H1 (cell line): ENCODE measurements at regions of chr10 and their contacts with region 1.

Region 1: DNA sequence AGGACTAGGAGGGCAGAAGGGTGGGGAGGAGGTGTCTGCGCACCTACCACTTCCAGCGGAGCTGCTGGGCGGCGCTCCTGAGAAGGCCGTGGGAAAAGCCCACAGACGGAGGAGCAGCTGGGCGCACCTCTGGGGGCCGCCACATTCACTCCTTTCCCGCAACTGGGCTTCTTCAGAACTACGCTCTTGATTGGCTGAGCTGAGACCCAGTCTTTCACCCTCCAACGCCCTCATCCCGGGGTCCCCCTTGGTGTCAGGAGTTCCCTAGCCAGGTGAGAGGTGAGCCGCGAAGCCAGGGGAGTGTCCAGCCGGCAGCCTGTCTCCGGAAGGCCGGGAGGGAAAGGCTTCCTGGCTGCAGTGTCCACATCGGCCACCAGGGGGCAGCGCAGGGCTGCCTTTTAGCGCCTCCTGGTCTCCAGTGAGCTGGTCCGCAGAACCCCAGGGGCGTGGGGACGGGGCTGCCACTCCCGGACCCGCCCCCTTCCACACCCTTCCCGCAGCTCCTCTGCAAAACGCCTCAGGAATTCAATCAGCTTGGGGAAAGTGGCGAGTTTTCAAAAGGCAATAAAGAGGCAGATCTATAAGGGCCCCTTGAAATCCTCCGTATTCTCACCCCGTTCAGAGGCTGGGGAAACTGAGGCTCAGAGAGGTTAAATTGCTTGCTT is 98.8 kb downstream of the CHST15 start:
- DNase-seq: peak; percentile 82 to 100
- H3K4me3 ChIP-seq: peak overlapping the region; percentile 8 to 59 (median 41); a peak in 7 of 8 replicates
- H3K27ac ChIP-seq: no peak overlapping the region
- H3K4me1 ChIP-seq: peaks cover 0 to 12% (median 3%) of the 10 kb centered on the region in 4 experiments; a peak in 5 of 7 replicates
- H3K27me3 ChIP-seq: peaks cover 0 to 14% (median 10%) of the 10 kb centered on the region in 4 experiments; a peak in 6 of 7 replicates
- CTCF ChIP-seq: peak; percentile 95 to 97 (median 96)
- EP300 ChIP-seq: peak in 1 of 2 experiments; percentile 25; a peak in 1 of 3 replicates
- POLR2A ChIP-seq: no peak
- RAD21 ChIP-seq: peak; percentile 94 to 95

Region 2: GRCh38 chr10:123858077-123858681 is 136.4 kb before region 1 on chr10:
- CTCF ChIA-PET with region 1: no interaction called
- POLR2A ChIA-PET with region 1: no interaction called
- DNase-seq: peak in 1 of 2 experiments; percentile 20
- H3K4me3 ChIP-seq: no peak overlapping the region
- H3K27ac ChIP-seq: no peak overlapping the region
- H3K4me1 ChIP-seq: peaks cover 0 to 3% (median under 1%) of the 10 kb centered on the region in 4 experiments; a peak in 3 of 7 replicates
- H3K27me3 ChIP-seq: no peaks in the 10 kb centered on the region
- CTCF ChIP-seq: no peak
- EP300 ChIP-seq: no peak
- POLR2A ChIP-seq: no peak
- RAD21 ChIP-seq: no peak

Region 3: GRCh38 chr10:123945325-123945920 is 49.1 kb before region 1 on chr10:
- CTCF ChIA-PET with region 1: no interaction called
- POLR2A ChIA-PET with region 1: no interaction called
- DNase-seq: no peak
- H3K4me3 ChIP-seq: no peak overlapping the region
- H3K27ac ChIP-seq: no peak overlapping the region
- H3K4me1 ChIP-seq: peaks cover 0 to 8% (median 0%) of the 10 kb centered on the region in 4 experiments; a peak in 2 of 7 replicates
- H3K27me3 ChIP-seq: no peaks in the 10 kb centered on the region
- CTCF ChIP-seq: no peak
- EP300 ChIP-seq: no peak
- POLR2A ChIP-seq: no peak
- RAD21 ChIP-seq: no peak

Region 4: DNA sequence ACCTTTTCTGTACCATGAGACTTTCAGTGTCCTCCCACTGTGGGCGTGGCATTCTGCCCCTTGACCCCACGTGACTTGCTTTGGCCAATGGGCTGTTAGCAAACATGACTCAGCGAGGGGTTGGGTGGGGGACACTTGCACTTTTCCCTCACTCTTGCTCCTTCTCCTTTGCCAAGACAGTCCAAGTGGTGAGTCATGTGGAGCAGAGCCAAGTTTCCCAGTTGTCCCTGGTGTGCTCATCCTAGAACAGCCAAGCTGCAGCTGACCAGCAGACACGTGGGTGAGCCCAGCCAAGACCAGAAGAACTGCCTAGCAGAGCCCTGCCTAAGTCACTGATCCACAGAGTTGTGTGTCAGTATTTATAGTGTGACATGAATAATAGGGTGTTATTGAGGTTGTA is 20.1 kb before region 1 on chr10:
- CTCF ChIA-PET with region 1: interaction called, 29 read pairs
- POLR2A ChIA-PET with region 1: no interaction called
- DNase-seq: peak in 1 of 2 experiments; percentile 46
- H3K4me3 ChIP-seq: no peak overlapping the region
- H3K27ac ChIP-seq: no peak overlapping the region
- H3K4me1 ChIP-seq: peaks cover 4 to 25% (median 12%) of the 10 kb centered on the region in 4 experiments
- H3K27me3 ChIP-seq: peaks cover 3 to 29% (median 25%) of the 10 kb centered on the region in 4 experiments
- CTCF ChIP-seq: no peak
- EP300 ChIP-seq: no peak
- POLR2A ChIP-seq: no peak
- RAD21 ChIP-seq: no peak

Region 5: DNA sequence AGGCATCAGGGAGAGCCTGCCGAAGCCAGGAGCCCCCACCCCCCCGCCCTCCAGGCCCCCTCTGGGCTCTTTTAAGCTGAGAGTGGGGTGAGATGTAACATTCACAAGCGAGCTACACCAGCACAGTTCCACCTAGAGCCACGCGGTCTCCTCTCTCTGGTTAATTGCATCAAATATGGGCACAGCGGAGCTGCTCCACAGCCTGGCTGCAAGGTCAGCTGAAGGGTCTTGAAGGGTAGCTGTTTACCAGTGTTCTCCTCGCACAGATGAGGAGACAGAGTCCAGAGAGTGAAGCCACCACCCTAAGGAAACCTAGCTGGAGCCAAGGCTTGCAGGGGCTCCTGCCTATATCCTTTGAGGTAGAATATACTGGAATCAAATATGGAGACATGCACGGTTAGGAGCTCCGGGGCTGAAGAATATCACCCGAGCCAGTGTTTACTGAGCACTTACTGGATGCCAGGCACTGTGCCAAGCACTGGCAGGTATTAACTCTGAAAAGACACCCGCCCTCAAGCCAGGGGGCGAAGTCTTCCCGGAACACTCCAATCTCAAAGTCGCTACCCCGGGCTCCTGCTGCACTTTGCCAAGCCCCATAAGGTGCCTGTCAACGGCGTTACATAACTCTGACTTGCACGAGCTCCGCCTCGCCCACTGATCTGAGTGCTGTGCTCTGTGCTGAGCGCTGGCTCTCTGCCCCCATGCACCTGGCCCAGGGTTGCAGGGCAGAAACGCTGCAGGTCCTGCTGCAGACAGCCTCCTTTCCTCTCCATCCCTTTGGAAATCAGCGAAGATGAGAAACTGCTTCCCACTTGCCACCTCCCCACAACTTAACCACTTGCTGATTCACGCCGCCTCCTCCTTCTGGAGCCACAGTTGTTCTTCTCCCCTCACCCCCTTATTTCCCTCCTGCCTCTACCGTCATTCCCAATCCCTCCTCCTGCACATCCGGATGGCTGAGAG is 93.4 kb after region 1 on chr10:
- CTCF ChIA-PET with region 1: interaction called, 20 read pairs
- POLR2A ChIA-PET with region 1: no interaction called
- DNase-seq: no peak
- H3K4me3 ChIP-seq: no peak overlapping the region
- H3K27ac ChIP-seq: no peak overlapping the region
- H3K4me1 ChIP-seq: peaks cover 0 to 3% (median 2%) of the 10 kb centered on the region in 4 experiments; a peak in 4 of 7 replicates
- H3K27me3 ChIP-seq: peaks cover 4 to 32% (median 23%) of the 10 kb centered on the region in 4 experiments; a peak in 6 of 7 replicates
- CTCF ChIP-seq: no peak
- EP300 ChIP-seq: no peak
- POLR2A ChIP-seq: no peak
- RAD21 ChIP-seq: no peak

Region 6: DNA sequence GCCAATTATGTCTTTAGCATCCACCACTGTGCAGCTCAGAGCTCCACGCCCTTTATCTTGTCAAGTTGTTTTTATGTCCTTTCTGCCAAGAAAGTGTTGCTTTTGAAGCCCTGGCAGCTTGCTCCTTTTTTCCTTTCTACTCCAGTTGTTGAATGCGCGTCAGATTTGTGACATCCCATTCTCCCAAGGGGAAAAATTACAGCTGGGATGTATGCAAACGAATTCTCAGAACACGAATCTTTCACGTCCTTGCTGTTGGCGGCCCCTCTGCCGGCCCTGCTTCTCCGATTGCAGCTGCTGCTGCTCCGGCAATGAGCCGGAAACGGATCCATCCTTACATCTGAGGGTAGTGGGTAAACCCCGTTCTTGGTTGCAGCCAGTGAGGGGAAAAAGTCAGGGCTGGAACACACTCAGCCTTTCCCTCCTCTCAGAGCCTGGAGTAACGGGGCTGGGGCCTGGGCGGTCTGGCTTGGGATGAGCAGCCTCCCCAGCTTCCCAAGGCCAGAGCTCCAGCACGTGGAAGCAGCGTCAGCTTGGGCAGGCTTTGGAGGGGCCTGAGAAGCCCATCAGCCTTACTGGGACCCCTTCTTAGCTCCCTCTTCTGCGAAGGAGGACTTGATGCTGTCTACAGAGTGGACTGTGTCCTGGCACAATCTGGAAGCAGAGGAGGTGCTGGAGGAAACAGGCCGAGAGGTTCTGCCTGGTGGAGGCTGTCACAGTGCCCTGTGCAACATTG is 177.8 kb after region 1 on chr10:
- CTCF ChIA-PET with region 1: interaction called, 12 read pairs
- POLR2A ChIA-PET with region 1: no interaction called
- DNase-seq: peak in 1 of 2 experiments; percentile 40
- H3K4me3 ChIP-seq: no peak overlapping the region
- H3K27ac ChIP-seq: no peak overlapping the region
- H3K4me1 ChIP-seq: no peaks in the 10 kb centered on the region; a peak in 2 of 7 replicates
- H3K27me3 ChIP-seq: no peaks in the 10 kb centered on the region
- CTCF ChIP-seq: no peak
- EP300 ChIP-seq: no peak
- POLR2A ChIP-seq: no peak
- RAD21 ChIP-seq: no peak

Region 7: GRCh38 chr10:124279882-124280281 is 285.3 kb after region 1 on chr10:
- CTCF ChIA-PET with region 1: interaction called, 27 read pairs
- POLR2A ChIA-PET with region 1: no interaction called
- DNase-seq: no peak
- H3K4me3 ChIP-seq: no peak overlapping the region
- H3K27ac ChIP-seq: no peak overlapping the region
- H3K4me1 ChIP-seq: no peaks in the 10 kb centered on the region
- H3K27me3 ChIP-seq: no peaks in the 10 kb centered on the region
- CTCF ChIP-seq: no peak
- EP300 ChIP-seq: no peak
- POLR2A ChIP-seq: no peak
- RAD21 ChIP-seq: no peak

Region 8: DNA sequence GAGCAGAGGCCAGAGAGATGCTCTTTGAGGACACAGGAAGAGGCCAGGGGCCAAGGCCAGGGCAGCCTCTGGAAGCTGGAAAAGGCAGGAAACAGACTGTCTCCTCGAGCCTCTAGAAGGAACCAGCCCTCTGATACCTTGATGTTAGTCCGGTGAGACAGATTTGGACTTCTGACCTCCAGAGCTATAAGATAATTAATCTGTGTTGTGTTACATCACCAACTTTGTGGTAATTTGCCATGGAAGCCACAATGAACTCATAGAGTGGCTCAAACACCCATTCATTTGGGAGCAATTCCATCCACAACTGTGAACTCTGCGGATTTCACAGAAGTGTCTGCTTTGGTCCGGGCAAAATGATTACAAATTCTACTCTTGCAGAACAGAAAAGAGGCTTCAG is 375.4 kb after region 1 on chr10:
- CTCF ChIA-PET with region 1: interaction called, 18 read pairs
- POLR2A ChIA-PET with region 1: no interaction called
- DNase-seq: no peak
- H3K4me3 ChIP-seq: no peak overlapping the region
- H3K27ac ChIP-seq: no peak overlapping the region
- H3K4me1 ChIP-seq: peaks cover 2 to 4% (median 3%) of the 10 kb centered on the region in 4 experiments; a peak in 4 of 7 replicates
- H3K27me3 ChIP-seq: no peaks in the 10 kb centered on the region; a peak in 1 of 7 replicates
- CTCF ChIP-seq: no peak
- EP300 ChIP-seq: no peak
- POLR2A ChIP-seq: no peak
- RAD21 ChIP-seq: no peak

Region 9: DNA sequence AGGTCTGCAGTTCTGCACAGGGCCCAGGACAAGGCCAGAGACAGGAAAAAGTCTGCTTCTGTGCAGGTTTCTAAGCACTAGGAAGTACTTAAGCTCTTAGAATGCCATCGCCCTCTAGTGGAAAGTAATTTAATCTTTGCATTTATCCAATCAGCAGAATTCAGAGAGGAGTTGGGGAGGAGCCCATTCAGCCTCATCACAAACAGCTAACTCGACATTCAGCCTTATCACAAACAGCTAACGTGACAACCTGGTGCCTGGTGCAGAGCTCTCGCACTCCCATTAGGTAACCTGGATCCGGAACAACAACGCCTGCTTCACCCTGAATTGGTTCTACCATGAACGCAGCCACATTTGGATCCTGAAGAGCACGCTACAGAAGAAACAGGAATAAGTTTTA is 409.0 kb after region 1 on chr10:
- CTCF ChIA-PET with region 1: interaction called, 19 read pairs
- POLR2A ChIA-PET with region 1: no interaction called
- DNase-seq: peak; percentile 51 to 57
- H3K4me3 ChIP-seq: no peak overlapping the region
- H3K27ac ChIP-seq: no peak overlapping the region
- H3K4me1 ChIP-seq: no peaks in the 10 kb centered on the region
- H3K27me3 ChIP-seq: no peaks in the 10 kb centered on the region
- CTCF ChIP-seq: peak in 2 of 3 experiments; percentile 73 to 83; a peak in 3 of 4 replicates
- EP300 ChIP-seq: no peak
- POLR2A ChIP-seq: no peak
- RAD21 ChIP-seq: peak; percentile 61 to 79